Activated naive CD4-positive, alpha-beta T cell treated with anti-CD3 and anti-CD28 coated beads for 36 hours (primary cell): ENCODE measurements at regions of chr12 and their contacts with region 1.

Region 1: DNA sequence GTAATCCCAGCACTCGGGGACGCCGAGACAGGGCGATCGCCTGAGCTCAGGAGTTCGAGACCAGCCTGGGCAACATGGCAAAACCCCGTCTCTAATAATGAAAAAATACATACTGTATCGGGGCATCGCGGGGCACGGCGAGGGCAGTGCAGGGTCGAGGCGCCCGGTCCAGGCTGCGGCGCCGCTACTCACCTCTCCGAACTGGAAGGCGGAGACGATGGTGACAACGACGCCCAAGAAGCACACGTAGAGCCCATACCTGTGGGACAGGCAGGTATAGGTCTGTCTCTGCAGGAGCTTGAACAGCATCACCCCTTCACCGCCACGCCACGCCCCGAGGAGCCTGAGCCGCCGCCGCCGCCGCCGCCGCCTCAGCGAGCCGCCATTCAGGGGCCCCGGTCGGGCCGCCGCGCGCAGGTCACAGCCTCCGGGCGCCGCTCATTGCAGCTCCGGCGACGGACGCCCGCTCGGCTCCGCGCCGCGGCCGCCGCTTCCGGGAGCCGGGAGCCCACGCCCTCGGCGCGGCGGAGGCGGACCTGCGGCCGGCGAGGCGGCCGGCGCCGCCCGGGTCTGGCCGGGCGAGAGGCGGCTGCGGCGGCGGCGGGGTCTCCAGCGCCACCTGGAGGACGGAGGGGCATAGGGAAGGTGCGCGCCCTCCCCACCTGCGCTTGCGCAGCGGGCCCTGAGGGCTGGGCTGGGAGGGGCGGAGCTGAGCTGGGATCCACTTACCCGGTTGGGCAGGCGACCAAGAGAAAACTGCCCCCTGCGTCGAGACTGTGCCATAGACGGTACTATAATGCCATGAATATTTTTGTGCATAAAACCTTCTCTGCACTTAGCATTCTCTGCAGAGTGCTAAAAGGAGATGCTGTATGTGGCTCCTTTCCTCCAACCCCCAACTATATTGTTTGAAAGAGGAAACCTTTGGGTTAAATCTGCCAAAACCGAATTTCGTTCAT is at the start of gene GNPTAB:
- DNase-seq: peak; percentile 97
- H3K4me3 Mint-ChIP-seq: peak within 1 kb of the TSS; percentile 96
- H3K27ac Mint-ChIP-seq: peak within 1 kb of the TSS; percentile 84
- H3K4me1 Mint-ChIP-seq: peaks cover 43% of the 10 kb centered on the region
- H3K27me3 Mint-ChIP-seq: no peaks in the 10 kb centered on the region
- total RNA-seq, gene GNPTAB: 13.6 to 13.7 TPM

Region 2: GRCh38 chr12:100974747-100975146 is 855.9 kb before region 1 on chr12:
- CTCF ChIA-PET with region 1: no interaction called
- intact Hi-C with region 1: no loop called
- DNase-seq: no peak
- H3K4me3 Mint-ChIP-seq: no peak overlapping the region
- H3K27ac Mint-ChIP-seq: no peak overlapping the region
- H3K4me1 Mint-ChIP-seq: no peaks in the 10 kb centered on the region
- H3K27me3 Mint-ChIP-seq: no peaks in the 10 kb centered on the region

Region 3: DNA sequence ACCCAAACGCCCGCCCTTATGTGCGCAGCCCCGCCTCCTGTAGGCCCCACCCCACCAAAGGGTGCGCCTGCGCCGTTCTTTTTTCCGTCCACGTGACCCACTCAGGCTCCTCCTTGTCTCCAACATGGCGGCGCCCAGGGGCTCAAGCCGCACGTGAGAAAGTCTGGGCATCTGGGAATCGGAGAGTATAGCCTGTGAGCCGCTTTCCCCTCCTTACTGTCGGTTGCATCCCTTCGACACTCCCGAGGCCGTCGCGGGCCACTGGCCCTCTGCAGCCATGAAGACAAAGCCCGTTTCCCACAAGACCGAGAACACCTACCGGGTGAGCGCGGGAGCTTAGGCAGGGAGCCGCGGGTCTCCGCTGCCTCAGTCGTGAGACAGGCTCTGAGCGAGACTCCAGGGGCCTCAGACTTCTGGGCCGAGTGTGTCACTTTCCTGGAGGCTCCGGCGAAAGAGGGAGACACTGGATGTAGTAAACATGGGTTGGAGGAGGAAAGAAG is 550.6 kb before region 1 on chr12 and contains the start of gene UTP20:
- CTCF ChIA-PET with region 1: no interaction called
- intact Hi-C with region 1: loop called (anchors 10 kb)
- DNase-seq: peak; percentile 96
- H3K4me3 Mint-ChIP-seq: peak within 1 kb of the TSS; percentile 94
- H3K27ac Mint-ChIP-seq: peak within 1 kb of the TSS; percentile 73
- H3K4me1 Mint-ChIP-seq: peaks cover 24% of the 10 kb centered on the region
- H3K27me3 Mint-ChIP-seq: peaks cover 6% of the 10 kb centered on the region
- total RNA-seq, gene UTP20: 15.8 to 16.8 TPM

Region 4: DNA sequence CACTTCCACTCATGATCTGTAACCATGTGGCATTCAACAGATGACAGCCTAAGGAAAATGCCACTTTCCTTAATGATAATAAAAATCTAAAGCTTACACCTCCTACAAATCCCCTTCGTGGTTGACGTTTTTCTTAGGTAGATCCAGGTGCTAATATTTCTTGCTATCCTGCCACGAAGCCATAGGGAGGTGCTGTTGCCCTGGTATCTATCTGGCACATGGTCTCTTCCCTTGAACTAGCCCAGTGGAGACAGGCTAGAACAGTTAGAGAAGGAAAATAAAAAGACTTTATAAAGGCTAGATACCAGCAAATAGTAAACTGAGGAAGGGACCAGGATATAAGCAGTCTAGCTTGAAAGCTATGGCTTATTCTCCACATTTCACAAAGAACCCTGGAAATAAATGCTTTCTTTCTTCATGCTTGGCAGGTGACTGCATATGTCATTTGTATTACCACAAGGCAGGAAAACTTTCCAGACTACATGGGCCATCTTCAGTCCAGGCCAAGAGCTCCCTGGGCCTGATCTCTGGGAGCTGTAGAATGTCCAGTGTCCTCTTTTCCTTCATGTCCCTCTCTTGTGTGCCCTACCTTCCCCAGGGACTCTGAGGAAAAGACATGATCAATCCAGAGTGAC is 340.2 kb before region 1 on chr12:
- CTCF ChIA-PET with region 1: no interaction called
- intact Hi-C with region 1: loop called (anchors 2 kb)
- DNase-seq: peak; percentile 48
- H3K4me3 Mint-ChIP-seq: no peak overlapping the region
- H3K27ac Mint-ChIP-seq: no peak overlapping the region
- H3K4me1 Mint-ChIP-seq: no peaks in the 10 kb centered on the region
- H3K27me3 Mint-ChIP-seq: peaks cover 1% of the 10 kb centered on the region

Region 5: DNA sequence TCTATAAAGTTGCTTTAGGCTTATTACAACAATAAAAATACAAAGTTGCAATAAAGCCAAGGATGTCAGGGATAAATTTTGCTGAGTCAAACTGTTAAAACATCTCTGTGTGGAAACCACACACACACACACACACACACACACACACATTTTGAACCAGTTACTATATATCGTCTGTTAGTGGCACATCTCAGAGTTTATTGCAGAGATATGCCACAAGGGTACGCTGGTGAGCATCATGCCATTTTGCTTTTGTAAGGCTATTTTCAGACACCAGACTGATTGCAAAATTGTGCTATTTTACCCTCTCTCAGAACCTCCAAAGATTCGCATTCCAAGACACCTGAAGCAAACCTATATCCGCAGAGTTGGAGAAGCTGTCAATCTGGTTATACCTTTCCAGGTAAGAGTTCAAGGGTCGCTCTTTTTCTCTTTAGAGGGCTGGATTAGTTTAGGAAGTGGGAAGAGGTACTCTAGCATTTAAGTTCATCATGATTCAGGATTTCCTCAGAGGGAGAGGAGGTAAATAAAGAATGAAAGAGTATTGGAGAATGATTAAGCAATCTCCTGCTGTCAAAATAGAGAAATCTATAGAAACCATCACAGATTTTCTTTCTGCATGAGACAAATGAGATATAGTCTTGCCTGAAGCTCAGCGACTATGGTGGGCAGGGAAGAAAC is 160.5 kb before region 1 on chr12:
- CTCF ChIA-PET with region 1: no interaction called
- intact Hi-C with region 1: loop called (anchors 2 kb)
- DNase-seq: peak; percentile 70
- H3K4me3 Mint-ChIP-seq: no peak overlapping the region
- H3K27ac Mint-ChIP-seq: no peak overlapping the region
- H3K4me1 Mint-ChIP-seq: peaks cover 22% of the 10 kb centered on the region
- H3K27me3 Mint-ChIP-seq: peaks cover 2% of the 10 kb centered on the region

Region 6: DNA sequence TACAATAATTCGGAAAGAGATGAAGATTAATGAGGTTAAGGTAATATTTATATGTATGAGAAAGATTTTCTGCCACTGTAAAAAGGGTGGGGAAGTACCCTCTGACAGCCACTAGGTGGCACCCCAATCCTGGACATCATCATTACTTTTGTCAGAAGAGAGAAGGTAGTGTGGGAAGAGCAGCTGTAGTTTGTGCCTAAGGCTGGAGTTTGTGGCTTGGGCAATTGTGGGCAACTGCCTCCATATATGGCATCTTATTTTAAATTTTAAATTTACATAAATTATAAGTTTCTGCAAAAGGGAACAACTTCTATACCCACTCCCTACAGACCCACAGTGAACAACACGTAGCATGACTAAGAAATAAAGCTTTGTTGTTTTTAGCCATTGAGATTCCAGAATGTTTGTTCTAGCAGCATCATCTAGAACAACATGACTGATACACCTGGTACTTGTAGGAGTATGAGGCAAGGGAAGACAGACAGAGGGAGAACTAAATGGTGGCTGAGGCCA is 56.9 kb before region 1 on chr12:
- CTCF ChIA-PET with region 1: interaction called, 77 read pairs
- intact Hi-C with region 1: loop called (anchors 1 kb)
- DNase-seq: peak; percentile 78
- H3K4me3 Mint-ChIP-seq: no peak overlapping the region
- H3K27ac Mint-ChIP-seq: no peak overlapping the region
- H3K4me1 Mint-ChIP-seq: peaks cover 4% of the 10 kb centered on the region
- H3K27me3 Mint-ChIP-seq: no peaks in the 10 kb centered on the region

Region 7: GRCh38 chr12:101792051-101792931 is 38.4 kb before region 1 on chr12:
- CTCF ChIA-PET with region 1: interaction called, 37 read pairs
- intact Hi-C with region 1: loop called (anchors 1 kb)
- DNase-seq: no peak
- H3K4me3 Mint-ChIP-seq: no peak overlapping the region
- H3K27ac Mint-ChIP-seq: no peak overlapping the region
- H3K4me1 Mint-ChIP-seq: peaks cover 22% of the 10 kb centered on the region
- H3K27me3 Mint-ChIP-seq: no peaks in the 10 kb centered on the region

Region 8: DNA sequence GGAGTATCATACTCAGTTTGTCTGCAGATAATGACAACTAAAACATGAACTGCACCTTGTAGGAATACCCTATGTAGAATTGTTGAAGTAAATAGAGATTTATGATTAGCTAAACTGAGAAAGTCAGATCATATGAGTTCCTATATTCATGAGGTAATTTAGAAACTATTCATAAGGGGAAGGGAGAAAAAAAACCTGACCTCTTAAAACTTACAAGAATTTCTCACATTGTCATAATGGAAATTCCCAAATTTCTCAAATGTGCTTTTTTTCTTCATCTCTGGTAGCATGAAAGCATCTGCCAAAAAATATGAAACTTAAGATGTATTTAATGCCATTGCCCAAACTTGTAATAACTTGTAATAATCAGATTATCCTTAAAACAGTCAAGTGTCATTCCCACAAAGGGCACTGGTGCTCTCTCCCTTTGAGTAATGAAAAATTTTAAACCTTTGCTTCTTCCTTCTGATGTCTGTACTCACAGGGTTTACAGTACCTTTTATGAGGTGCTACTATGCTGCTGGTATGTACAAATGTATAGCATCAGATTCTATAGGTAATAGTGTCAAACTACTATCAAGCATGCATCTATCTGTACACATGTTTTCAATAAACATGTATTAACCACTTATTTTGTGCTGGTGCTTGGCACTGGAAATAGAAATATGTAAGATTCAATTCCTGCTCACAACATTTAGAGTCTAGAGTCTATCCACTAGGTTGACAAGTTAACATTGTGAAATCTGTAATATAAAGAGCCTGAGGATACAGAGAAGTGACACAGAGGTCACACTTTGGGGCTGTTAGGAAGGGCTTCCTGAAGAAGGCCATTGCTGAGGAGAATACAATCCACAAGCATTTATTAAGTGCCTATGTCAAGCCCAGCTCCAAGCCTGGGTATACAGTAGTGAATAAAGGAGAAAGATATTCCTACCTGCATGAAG is 29.3 kb after region 1 on chr12:
- CTCF ChIA-PET with region 1: no interaction called
- intact Hi-C with region 1: loop called (anchors 1 kb)
- DNase-seq: no peak
- H3K4me3 Mint-ChIP-seq: no peak overlapping the region
- H3K27ac Mint-ChIP-seq: peak overlapping the region; percentile 54
- H3K4me1 Mint-ChIP-seq: peaks cover 24% of the 10 kb centered on the region
- H3K27me3 Mint-ChIP-seq: peaks cover 2% of the 10 kb centered on the region